ENCODE measurements at regions of chr2 and their contacts with region 1.

Region 1: GRCh38 chr2:8662239-8662895 is 19.5 kb upstream of the ID2 start:
- DNase-seq: peak in 1 of 5 donors; percentile 14
- H3K4me3 ChIP-seq: no peak overlapping the region
- H3K27ac ChIP-seq: peak overlapping the region in 1 of 2 donors; percentile 18
- H3K4me1 ChIP-seq: peaks cover 16% of the 10 kb centered on the region
- H3K27me3 ChIP-seq: no peaks in the 10 kb centered on the region
- CTCF ChIP-seq: no peak
- EP300 ChIP-seq: no peak
- POLR2A ChIP-seq: no peak

Region 2: GRCh38 chr2:8424997-8425900 is 237.1 kb before region 1 on chr2:
- intact Hi-C with region 1: no loop called
- DNase-seq: no peak
- H3K4me3 ChIP-seq: no peak overlapping the region
- H3K27ac ChIP-seq: no peak overlapping the region
- H3K4me1 ChIP-seq: peaks cover 1% of the 10 kb centered on the region
- H3K27me3 ChIP-seq: no peaks in the 10 kb centered on the region
- CTCF ChIP-seq: no peak
- EP300 ChIP-seq: no peak
- POLR2A ChIP-seq: no peak

Region 3: DNA sequence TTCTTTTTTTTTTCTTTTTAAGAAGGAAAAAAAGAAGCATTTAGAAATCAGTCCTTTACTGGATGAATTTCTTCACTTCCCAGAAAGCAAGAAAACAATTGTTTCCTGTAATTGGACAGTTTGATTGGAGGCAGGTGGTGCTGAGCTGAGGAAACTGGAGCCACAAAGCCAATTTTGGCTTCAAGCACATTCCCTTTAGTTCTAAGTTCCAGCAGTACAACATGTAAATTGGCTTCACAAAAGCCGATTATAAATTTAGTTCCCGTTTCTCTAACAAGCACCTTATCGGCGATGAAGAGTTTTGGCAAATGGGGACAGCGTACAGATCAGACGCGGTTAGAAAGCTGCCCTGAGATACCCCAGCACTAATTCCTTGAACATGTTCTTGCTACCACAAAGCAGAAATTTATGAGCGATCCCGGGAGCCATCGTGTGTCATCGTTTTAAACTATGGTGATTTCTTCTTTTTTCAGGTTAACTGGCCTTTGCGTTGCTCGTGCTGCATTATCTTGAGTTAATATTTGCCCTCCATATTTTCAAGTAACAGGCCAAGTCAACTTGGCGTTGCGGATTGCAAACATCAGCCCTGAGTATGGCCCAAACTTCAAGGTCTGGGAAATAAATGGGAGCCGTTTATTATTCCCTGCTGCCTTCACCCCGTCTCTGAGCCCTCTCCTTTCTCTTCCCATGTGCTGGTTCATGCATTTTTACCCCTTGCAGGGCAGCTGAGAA is 170.9 kb before region 1 on chr2:
- intact Hi-C with region 1: loop called in 1 of 4 experiments (anchors 10 kb)
- DNase-seq: peak in 2 of 5 donors; percentile 56 to 69
- H3K4me3 ChIP-seq: no peak overlapping the region
- H3K27ac ChIP-seq: peak overlapping the region in 1 of 2 donors; percentile 62
- H3K4me1 ChIP-seq: peaks cover 5% of the 10 kb centered on the region
- H3K27me3 ChIP-seq: no peaks in the 10 kb centered on the region
- CTCF ChIP-seq: no peak
- EP300 ChIP-seq: peak; percentile 95
- POLR2A ChIP-seq: peak; percentile 31

Region 4: GRCh38 chr2:8681786-8682692 is 19.7 kb after region 1 on chr2 and contains the start of gene ID2:
- intact Hi-C with region 1: no loop called
- DNase-seq: peak; percentile 99 to 100 (median 99)
- H3K4me3 ChIP-seq: peak within 1 kb of the TSS; percentile 73
- H3K27ac ChIP-seq: peak within 1 kb of the TSS; percentile 58 to 97
- H3K4me1 ChIP-seq: no peaks in the 10 kb centered on the region
- H3K27me3 ChIP-seq: no peaks in the 10 kb centered on the region
- CTCF ChIP-seq: peak in 2 of 3 donors; percentile 9 to 21
- EP300 ChIP-seq: no peak
- POLR2A ChIP-seq: peak; percentile 99
- total RNA-seq, gene ID2: 68.5 to 897 (median 168) TPM

Measured in ovary (tissue), 10 donors.